ENCODE measurements at regions of chr11 and their contacts with region 1.

Region 1: GRCh38 chr11:108278546-108278945 is 55.7 kb downstream of the ATM start:
- DNase-seq: no peak
- ATAC-seq: peak in 1 of 4 donors; percentile 46
- H3K4me3 ChIP-seq: no peak overlapping the region
- H3K27ac ChIP-seq: no peak overlapping the region
- H3K4me1 ChIP-seq: peaks cover 4% of the 10 kb centered on the region
- H3K27me3 ChIP-seq: no peaks in the 10 kb centered on the region
- CTCF ChIP-seq: no peak

Region 2: GRCh38 chr11:108093128-108093904 is 185.2 kb before region 1 on chr11:
- intact Hi-C with region 1: no loop called
- DNase-seq: no peak
- ATAC-seq: no peak
- H3K4me3 ChIP-seq: no peak overlapping the region
- H3K27ac ChIP-seq: no peak overlapping the region
- H3K4me1 ChIP-seq: no peaks in the 10 kb centered on the region
- H3K27me3 ChIP-seq: no peaks in the 10 kb centered on the region
- CTCF ChIP-seq: no peak

Region 3: GRCh38 chr11:108246885-108247284 is 31.7 kb before region 1 on chr11:
- intact Hi-C with region 1: loop called in 1 of 2 experiments (anchors 5 kb)
- DNase-seq: no peak
- ATAC-seq: no peak
- H3K4me3 ChIP-seq: no peak overlapping the region
- H3K27ac ChIP-seq: no peak overlapping the region
- H3K4me1 ChIP-seq: no peaks in the 10 kb centered on the region
- H3K27me3 ChIP-seq: no peaks in the 10 kb centered on the region
- CTCF ChIP-seq: no peak

Region 4: GRCh38 chr11:108307751-108308150 is 29.2 kb after region 1 on chr11:
- intact Hi-C with region 1: no loop called
- DNase-seq: no peak
- ATAC-seq: no peak
- H3K4me3 ChIP-seq: no peak overlapping the region
- H3K27ac ChIP-seq: no peak overlapping the region
- H3K4me1 ChIP-seq: no peaks in the 10 kb centered on the region
- H3K27me3 ChIP-seq: no peaks in the 10 kb centered on the region
- CTCF ChIP-seq: no peak